ENCODE measurements at regions of chrX and their contacts with region 1.

Region 1: DNA sequence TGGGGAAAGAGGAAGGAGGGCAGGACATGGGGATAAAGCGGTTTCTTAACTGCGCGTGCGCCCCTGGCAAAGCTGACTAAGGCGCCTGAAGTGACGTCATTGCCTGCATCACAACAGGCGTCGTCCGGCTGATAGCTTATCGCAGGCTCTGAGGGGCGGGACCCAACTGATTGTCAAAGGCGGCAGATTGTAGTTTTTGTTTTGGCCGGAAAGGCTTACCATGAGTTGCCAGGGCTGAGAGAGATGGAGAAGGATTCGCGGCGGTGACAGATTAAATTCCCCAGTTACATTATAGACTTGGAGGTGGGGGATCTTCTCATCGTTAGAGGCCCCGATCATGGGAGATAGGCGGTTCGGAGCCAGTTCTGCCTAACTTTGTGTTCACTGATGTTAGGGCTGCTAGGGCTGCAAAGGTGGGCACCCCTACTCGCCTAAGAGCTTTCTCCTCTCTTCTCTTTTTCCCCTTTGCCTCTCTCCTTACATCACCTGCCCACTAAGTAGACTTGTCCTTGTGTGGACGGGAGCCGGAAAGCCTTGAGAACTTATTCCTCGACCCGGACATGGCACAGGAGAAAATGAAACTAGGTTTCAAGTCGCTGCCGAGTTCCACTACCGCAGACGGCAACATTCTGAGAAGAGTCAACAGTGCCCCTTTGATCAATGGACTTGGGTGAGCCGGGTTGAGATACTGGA is 148.9 kb upstream of the PLAC1 start:
- DNase-seq: peak; percentile 94
- H3K4me3 ChIP-seq: peak overlapping the region; percentile 68 to 94 (median 91)
- H3K27ac ChIP-seq: peak overlapping the region; percentile 90
- H3K4me1 ChIP-seq: peaks cover 6% of the 10 kb centered on the region
- H3K27me3 ChIP-seq: no peaks in the 10 kb centered on the region
- CTCF ChIP-seq: no peak
- POLR2A ChIP-seq: peak; percentile 37

Region 2: DNA sequence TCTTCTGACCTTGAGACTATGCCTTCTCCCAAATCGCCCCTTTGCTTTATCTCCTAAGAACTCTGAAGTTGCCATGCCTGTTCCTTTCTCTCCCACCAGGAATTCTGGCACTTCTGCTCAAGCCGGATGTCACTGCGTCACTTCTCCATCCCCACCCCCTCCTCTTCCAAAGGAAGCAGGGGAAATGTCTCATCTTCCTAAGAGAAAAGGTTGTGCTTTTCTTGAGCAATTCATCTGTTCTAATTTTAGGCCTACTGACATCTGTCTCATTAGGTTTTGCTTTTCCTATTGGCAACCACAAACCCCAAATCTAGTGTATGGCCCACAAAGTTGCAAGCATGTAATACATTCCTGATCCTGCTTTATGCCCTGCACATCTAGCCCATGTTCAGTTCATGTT is 14.2 kb after region 1 on chrX:
- CTCF ChIA-PET with region 1: no interaction called
- POLR2A ChIA-PET with region 1: no interaction called
- dilution Hi-C with region 1: no loop called
- intact Hi-C with region 1: loop called (anchors 1 kb)
- DNase-seq: peak; percentile 90
- H3K4me3 ChIP-seq: peak overlapping the region in 1 of 3 experiments; percentile 39
- H3K27ac ChIP-seq: peak overlapping the region; percentile 76
- H3K4me1 ChIP-seq: peaks cover 19% of the 10 kb centered on the region
- H3K27me3 ChIP-seq: no peaks in the 10 kb centered on the region
- CTCF ChIP-seq: no peak
- POLR2A ChIP-seq: no peak

Region 3: DNA sequence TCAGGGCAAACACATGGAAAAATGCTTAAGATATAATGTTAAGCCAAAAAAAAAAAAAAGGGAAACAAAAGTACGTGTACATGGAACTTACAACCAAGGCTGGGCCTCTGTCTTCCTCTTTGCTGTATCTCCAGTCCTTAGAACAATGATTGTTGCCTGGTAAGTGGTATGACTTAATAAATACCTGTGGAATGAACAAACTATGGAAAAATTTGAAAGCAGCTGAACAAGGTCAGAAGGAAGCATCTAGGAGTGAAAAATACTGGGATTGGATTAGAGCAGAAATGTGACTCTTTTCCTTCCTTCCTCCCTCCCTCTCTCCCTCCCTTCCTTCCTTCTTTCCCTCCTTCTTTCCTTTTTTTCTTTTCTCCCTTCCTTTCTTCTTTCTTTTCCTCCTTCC is 129.4 kb after region 1 on chrX:
- CTCF ChIA-PET with region 1: no interaction called
- POLR2A ChIA-PET with region 1: no interaction called
- dilution Hi-C with region 1: no loop called
- intact Hi-C with region 1: no loop called
- DNase-seq: peak; percentile 68
- H3K4me3 ChIP-seq: no peak overlapping the region
- H3K27ac ChIP-seq: no peak overlapping the region
- H3K4me1 ChIP-seq: peaks cover 2% of the 10 kb centered on the region
- H3K27me3 ChIP-seq: no peaks in the 10 kb centered on the region
- CTCF ChIP-seq: no peak
- POLR2A ChIP-seq: no peak

Region 4: DNA sequence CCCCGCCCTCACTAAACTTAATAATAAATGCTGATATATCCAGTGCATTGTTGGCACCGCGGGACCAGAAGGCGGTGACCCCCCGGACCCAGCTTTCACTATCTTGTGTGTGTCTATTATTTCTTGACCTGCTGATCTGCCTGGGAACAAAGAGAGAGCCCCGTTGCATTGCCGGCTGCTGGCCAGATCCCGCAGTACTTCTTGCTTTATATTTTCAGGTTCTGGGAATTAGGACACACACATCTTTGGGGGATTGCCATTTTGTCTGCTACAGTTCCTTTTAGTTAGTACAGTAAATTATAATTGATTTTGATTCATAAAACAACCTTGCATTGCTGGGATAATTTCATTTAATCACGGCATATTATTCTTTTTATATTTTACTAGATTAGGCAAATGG is 217.3 kb after region 1 on chrX:
- CTCF ChIA-PET with region 1: no interaction called
- POLR2A ChIA-PET with region 1: no interaction called
- dilution Hi-C with region 1: no loop called
- intact Hi-C with region 1: loop called (anchors 10 kb)
- DNase-seq: no peak
- H3K4me3 ChIP-seq: no peak overlapping the region
- H3K27ac ChIP-seq: no peak overlapping the region
- H3K4me1 ChIP-seq: peaks cover 5% of the 10 kb centered on the region
- H3K27me3 ChIP-seq: no peaks in the 10 kb centered on the region
- CTCF ChIP-seq: no peak
- POLR2A ChIP-seq: no peak

Measured in endothelial cell of umbilical vein (primary cell).